Dendritic cell treated with granulocyte-macrophage colony-stimulating factor and Interleukin-4, amounts not matched to agents 40 ng/mL and 50 ng/mL, for 4 days (primary cell): ENCODE measurements at regions of chr7 and their contacts with region 1.

Region 1: GRCh38 chr7:23531794-23532489 is at the start of gene TRA2A:
- H3K4me3 Mint-ChIP-seq: peak within 1 kb of the TSS; percentile 99
- H3K27ac Mint-ChIP-seq: peak within 1 kb of the TSS; percentile 97
- H3K4me1 Mint-ChIP-seq: peaks cover 38% of the 10 kb centered on the region
- H3K27me3 Mint-ChIP-seq: no peaks in the 10 kb centered on the region

Region 2: GRCh38 chr7:22896917-22897316 is 635.0 kb before region 1 on chr7:
- intact Hi-C with region 1: no loop called
- H3K4me3 Mint-ChIP-seq: no peak overlapping the region
- H3K27ac Mint-ChIP-seq: no peak overlapping the region
- H3K4me1 Mint-ChIP-seq: no peaks in the 10 kb centered on the region
- H3K27me3 Mint-ChIP-seq: peaks cover 5% of the 10 kb centered on the region

Region 3: DNA sequence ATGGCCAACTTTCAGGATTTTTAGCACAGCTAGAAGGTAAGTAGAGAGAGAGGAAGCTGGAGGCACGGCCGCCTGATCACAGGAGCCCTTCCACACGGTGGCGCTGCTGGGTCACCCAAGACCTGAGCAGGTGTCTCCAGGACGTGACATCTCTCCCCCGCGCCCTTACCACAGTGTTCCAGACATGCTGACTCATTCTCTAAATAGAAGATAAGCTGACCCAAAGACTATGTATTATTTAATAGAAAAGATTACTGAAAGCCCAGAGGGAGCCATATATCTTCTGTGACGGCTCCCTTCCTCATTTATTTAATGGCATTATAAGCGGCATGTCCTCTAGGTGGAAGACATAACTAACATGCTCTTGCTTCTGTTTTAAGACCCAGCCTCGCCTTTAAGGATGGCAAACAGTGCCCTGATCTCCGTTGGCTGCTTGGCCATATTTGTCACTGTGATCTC is 258.8 kb before region 1 on chr7:
- intact Hi-C with region 1: loop called (anchors 10 kb)
- H3K4me3 Mint-ChIP-seq: no peak overlapping the region
- H3K27ac Mint-ChIP-seq: no peak overlapping the region
- H3K4me1 Mint-ChIP-seq: peaks cover 6% of the 10 kb centered on the region
- H3K27me3 Mint-ChIP-seq: peaks cover 3% of the 10 kb centered on the region

Region 4: DNA sequence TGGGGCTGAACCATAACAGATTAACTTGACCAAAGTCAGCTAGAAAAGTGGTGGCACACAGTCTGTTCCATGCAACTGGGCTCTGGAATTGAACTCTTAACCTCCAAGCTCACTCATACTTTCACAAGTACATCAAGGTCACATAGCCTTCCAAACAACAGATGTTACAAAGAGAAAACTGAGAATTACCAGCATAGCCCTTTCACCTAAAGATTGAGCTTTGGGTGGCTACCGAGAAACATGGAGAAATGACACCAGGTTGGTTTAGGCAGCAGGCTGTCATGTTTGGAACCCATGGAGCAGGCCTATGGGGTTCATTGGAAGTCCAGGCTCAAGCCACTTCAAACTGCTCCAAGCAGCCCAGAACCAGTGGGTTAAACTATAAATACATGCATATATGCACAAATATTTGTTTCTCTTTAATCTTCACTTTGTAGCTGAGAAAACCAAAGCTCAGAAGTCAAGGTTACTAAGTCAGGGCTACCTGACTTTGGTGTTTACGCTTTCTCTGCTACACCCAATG is 173.7 kb before region 1 on chr7:
- intact Hi-C with region 1: no loop called
- H3K4me3 Mint-ChIP-seq: no peak overlapping the region
- H3K27ac Mint-ChIP-seq: no peak overlapping the region
- H3K4me1 Mint-ChIP-seq: no peaks in the 10 kb centered on the region
- H3K27me3 Mint-ChIP-seq: no peaks in the 10 kb centered on the region

Region 5: GRCh38 chr7:23474094-23474828 is 57.7 kb before region 1 on chr7:
- intact Hi-C with region 1: loop called (anchors 5 kb)
- H3K4me3 Mint-ChIP-seq: peak overlapping the region; percentile 79
- H3K27ac Mint-ChIP-seq: peak overlapping the region; percentile 15
- H3K4me1 Mint-ChIP-seq: peaks cover 31% of the 10 kb centered on the region
- H3K27me3 Mint-ChIP-seq: peaks cover 73% of the 10 kb centered on the region

Region 6: GRCh38 chr7:23597094-23598091 is 65.5 kb after region 1 on chr7 and contains the start of gene CCDC126:
- intact Hi-C with region 1: loop called (anchors 2 kb)
- H3K4me3 Mint-ChIP-seq: peak within 1 kb of the TSS; percentile 81
- H3K27ac Mint-ChIP-seq: peak within 1 kb of the TSS; percentile 79
- H3K4me1 Mint-ChIP-seq: peaks cover 26% of the 10 kb centered on the region
- H3K27me3 Mint-ChIP-seq: peaks cover 17% of the 10 kb centered on the region

Region 7: DNA sequence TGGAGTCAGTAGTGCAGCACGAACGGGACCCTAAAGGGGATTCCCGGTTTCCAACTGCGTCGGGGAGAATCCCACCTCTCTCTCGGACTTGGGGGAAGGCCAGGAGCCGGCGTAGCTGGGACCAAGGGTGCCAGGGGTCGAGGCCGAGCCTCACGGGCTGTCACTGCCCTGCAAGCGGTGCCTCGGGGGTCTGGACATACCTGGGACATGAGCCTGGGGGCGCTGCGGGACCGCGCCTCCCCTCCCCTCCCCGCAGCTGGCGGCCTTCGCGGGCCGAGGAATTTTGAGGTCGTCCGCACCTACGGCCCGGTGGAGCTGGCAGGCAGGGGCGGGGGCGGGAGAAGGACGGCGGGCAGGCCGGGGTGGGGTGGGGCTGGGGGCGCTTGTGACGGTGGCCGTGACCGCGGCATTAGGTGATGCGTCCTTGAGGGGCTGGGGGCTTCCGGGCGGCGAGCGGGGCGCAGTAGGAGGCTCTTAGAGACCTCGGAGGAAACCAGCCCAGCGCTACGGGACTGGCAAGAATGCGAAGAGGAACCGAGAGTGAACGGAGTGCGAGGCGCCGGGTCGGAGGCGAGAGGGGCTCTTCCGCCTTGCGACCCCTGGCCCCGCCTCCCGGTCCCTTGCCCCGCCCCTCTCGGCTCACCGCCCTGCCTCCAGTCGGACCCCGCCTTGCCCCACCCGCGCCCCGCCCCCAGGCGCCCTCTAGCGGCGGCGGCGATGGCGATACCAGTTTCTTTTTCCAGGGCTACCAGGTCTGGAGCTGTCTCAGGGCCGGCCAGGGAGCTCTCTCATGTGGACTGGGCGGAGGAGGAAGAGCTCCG is 1648.0 kb after region 1 on chr7:
- intact Hi-C with region 1: loop called (anchors 5 kb)
- H3K4me3 Mint-ChIP-seq: peak overlapping the region; percentile 88
- H3K27ac Mint-ChIP-seq: peak overlapping the region; percentile 88
- H3K4me1 Mint-ChIP-seq: peaks cover 20% of the 10 kb centered on the region
- H3K27me3 Mint-ChIP-seq: peaks cover 13% of the 10 kb centered on the region